OCI-LY7 (cell line): ENCODE measurements at regions of chr21 and their contacts with region 1.

Region 1: GRCh38 chr21:36260030-36260787 is 59.8 kb upstream of the MORC3 start:
- DNase-seq: peak; percentile 79
- H3K4me3 ChIP-seq: peak overlapping the region; percentile 66
- H3K27ac ChIP-seq: peak overlapping the region; percentile 68
- H3K4me1 ChIP-seq: peaks cover 48% of the 10 kb centered on the region
- CTCF ChIP-seq: peak; percentile 96

Region 2: DNA sequence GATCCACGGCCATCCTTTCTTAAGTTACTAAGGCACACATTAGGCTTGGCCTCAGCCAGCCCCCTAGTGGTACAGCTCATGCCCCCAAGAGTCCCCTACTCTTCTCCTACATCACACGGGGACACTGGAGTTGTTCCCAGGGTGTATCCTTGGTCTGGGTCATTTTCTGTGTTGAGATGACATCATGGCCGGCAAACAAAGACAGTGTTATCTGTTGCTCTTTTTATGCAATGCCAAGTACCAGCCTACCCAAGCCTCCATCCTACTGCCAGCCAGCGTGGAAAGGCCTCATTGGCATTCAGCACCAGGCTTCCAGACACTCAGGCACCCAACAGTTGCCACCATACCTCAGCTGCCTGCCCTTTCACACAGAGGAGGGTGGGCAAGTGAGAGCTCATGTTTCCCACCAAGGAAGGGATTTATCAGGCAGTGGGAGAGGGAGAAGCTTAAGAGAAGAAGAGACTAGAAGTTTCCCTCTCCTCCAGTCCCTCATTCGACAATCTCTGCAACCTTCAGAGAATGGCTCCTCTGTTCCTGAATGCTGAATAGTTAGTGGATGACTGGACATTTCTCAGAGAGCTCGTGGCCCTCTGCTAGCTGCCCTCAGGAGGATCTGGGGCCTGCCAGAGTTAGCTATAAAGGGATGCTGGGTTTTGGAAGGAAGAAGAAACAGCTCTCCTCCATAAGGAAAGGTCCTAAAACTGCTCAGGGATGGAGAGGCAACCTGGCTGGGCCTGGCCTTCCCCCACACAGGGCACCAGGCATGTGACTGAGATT is 172.7 kb before region 1 on chr21:
- CTCF ChIA-PET with region 1: no interaction called
- POLR2A ChIA-PET with region 1: no interaction called
- intact Hi-C with region 1: no loop called
- DNase-seq: no peak
- H3K4me3 ChIP-seq: no peak overlapping the region
- H3K27ac ChIP-seq: no peak overlapping the region
- H3K4me1 ChIP-seq: no peaks in the 10 kb centered on the region
- CTCF ChIP-seq: peak; percentile 64

Region 3: DNA sequence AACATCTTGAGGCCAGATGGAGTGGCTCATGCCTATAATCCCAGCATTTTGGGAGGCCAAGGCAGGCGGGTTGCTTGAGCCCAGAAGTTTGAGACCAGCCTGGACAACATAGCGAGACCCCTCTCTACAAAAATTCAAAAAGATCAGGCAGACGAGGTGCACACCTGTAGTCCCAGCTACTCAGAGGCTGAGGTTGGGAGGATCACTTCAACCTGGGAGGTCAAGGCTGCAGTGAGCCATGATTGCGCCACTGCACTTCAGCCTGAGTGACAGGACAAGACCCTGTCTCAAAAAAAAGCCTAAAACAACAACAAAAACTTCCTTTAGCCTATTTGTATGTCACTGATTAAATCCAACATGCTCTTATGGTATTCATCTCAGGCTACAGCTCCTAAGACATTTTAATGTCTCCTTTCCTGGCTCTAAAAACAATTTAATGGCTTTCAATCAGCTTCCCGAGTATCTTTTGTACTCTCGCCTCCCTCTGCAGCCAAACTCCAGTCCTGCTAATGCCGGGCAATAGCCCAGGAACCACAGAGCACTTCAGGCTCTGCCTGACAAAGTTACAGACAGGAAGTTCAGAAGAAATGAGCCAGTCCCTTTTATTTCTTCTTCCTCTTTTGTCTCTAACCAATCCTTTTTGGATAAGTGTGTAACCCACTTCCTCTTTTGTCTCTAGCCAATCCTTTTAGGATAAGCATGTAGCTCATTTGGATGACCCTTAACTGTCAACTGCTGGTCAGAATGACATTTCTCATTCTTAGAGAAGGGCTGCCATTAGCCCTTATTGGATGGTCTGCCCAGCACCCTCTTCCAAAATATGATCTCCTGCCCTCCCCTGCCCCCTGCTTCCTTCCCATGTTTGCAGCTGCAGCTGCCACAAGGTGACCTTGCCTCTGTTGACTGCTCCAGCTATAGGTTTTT is 110.2 kb before region 1 on chr21:
- CTCF ChIA-PET with region 1: no interaction called
- POLR2A ChIA-PET with region 1: interaction called, 10 read pairs
- intact Hi-C with region 1: no loop called
- DNase-seq: peak; percentile 89
- H3K4me3 ChIP-seq: peak overlapping the region; percentile 37
- H3K27ac ChIP-seq: peak overlapping the region; percentile 76
- H3K4me1 ChIP-seq: peaks cover 26% of the 10 kb centered on the region
- CTCF ChIP-seq: no peak

Region 4: DNA sequence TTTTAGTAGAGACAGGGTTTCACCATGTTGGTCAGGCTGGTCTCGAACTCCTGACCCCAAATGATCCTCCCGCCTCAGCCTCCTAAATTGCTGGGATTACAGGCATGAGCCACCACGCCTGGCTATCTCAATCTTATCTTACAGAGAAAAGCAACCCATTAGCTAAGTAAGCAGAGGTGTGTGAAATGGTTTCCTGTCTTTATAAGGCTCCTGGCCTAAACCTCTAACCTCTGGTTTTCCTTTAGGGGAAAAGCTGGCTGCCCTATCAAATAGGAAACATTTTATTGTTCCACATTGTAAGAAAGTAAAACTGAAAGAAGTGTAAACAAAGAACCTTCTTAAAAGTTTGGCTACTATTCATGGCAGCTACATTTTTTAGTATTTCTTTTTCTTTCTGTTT is 18.5 kb before region 1 on chr21:
- CTCF ChIA-PET with region 1: no interaction called
- POLR2A ChIA-PET with region 1: interaction called, 10 read pairs
- intact Hi-C with region 1: no loop called
- DNase-seq: no peak
- H3K4me3 ChIP-seq: no peak overlapping the region
- H3K27ac ChIP-seq: no peak overlapping the region
- H3K4me1 ChIP-seq: no peaks in the 10 kb centered on the region
- CTCF ChIP-seq: no peak

Region 5: DNA sequence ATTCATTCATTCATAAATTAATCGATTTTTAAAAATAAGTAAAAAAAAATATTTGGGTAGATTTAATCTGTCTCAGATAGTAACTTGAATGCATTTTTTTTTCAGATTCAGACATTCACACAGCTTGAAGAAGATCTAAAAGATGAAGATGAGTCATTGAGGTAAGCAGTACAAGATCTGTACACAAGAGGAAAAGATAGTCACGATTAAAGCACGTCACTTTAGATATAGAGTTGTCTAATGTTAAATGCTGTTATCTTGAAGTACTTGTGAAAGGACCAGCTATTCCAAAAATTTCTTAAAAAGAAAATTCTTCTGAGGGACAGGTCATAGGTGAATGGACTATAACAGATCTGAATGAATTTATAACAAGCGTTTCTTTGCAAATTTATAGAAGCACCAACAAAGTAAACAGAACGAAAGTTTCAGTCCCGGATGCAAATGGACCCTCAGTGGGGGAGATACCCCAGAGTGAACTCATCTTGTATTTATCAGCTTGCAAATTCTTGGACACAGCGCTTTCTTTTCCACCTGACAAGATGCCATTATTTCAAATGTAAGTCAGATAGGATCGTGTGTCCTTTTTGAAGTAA is 28.5 kb after region 1 on chr21:
- CTCF ChIA-PET with region 1: interaction called, 4 read pairs
- POLR2A ChIA-PET with region 1: interaction called, 8 read pairs
- intact Hi-C with region 1: loop called (anchors 1 kb)
- DNase-seq: no peak
- H3K4me3 ChIP-seq: peak overlapping the region; percentile 57
- H3K27ac ChIP-seq: peak overlapping the region; percentile 96
- H3K4me1 ChIP-seq: peaks cover 39% of the 10 kb centered on the region
- CTCF ChIP-seq: no peak

Region 6: GRCh38 chr21:36330904-36331303 is 70.7 kb after region 1 on chr21:
- CTCF ChIA-PET with region 1: no interaction called
- POLR2A ChIA-PET with region 1: interaction called, 4 read pairs
- intact Hi-C with region 1: loop called (anchors 1 kb)
- DNase-seq: peak; percentile 76
- H3K4me3 ChIP-seq: no peak overlapping the region
- H3K27ac ChIP-seq: peak overlapping the region; percentile 4
- H3K4me1 ChIP-seq: peaks cover 25% of the 10 kb centered on the region
- CTCF ChIP-seq: peak; percentile 94

Region 7: DNA sequence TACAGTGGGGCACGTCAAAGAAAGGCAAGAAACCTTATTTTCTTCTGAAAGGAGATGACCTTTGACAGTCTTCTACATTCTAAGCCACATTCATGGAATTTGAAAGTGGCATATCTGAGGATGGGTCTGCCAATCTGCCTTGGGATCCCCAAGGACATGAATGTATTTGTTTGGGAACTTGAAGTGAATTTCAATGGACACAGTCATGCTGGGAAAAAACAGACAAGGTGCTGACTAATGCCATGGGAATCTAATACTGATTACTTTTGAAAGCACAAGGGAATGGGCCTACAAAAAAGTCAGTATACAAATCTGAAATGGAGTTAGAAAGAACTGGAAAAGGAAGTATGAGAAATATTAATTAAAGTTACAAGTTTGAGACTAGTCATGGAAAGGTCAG is 1527.2 kb after region 1 on chr21:
- CTCF ChIA-PET with region 1: no interaction called
- POLR2A ChIA-PET with region 1: no interaction called
- intact Hi-C with region 1: no loop called
- DNase-seq: no peak
- H3K4me3 ChIP-seq: no peak overlapping the region
- H3K27ac ChIP-seq: no peak overlapping the region
- H3K4me1 ChIP-seq: no peaks in the 10 kb centered on the region
- CTCF ChIP-seq: no peak